Common myeloid progenitor, CD34-positive (primary cell): ENCODE measurements at regions of chr4 and their contacts with region 1.

Region 1: DNA sequence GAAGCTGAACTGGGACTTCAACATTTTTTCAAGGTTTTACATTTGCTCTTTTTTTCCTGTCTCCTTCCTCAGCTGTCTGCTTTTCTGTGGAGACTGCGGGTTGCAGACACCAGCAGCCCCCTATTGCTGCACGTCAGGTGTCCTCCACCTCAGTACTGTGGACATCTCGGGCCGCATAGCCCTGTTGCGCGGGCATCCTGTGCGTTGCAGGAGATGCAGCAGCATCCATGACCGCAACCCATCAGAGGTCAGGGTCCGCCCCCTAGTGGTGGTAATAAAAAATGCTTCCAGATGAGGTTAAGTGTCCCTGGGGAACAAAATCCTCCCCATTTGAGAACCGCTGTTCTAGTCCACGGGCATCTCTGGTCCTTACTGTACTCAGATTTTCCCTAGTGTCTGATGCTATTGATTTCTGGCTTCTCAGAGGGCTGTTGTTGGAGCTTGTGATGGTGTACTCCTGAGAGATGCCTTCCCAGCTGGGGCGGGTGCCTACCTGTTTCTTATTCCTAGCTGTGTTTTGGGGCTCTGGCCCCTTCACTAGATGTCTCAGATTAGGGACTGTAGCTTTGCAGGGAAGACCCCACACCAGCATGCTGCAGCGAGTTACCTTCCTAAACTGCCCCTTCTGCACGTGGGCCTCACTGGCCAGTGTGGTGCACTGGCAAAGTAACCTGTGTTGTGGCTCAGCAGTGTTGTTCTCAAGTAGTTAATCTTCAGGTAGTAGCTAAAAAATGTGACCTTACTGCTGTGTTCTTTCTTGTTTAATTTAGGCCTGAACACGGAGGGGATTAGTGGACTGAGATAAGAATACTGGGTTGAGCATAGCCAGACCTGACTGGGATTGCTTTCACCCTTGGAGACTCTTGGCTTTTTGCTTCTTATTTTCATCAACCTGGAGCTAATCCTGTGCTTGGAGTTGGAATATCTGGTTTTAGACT is 28.2 kb downstream of the NSD2 start:
- DNase-seq: peak; percentile 75 to 87 (median 86)
- H3K4me3 ChIP-seq: peak overlapping the region in 2 of 7 experiments; percentile 23 to 42
- H3K27ac ChIP-seq: no peak overlapping the region
- H3K4me1 ChIP-seq: peaks cover 0 to 3% (median 3%) of the 10 kb centered on the region in 4 experiments
- H3K27me3 ChIP-seq: no peaks in the 10 kb centered on the region

Region 2: DNA sequence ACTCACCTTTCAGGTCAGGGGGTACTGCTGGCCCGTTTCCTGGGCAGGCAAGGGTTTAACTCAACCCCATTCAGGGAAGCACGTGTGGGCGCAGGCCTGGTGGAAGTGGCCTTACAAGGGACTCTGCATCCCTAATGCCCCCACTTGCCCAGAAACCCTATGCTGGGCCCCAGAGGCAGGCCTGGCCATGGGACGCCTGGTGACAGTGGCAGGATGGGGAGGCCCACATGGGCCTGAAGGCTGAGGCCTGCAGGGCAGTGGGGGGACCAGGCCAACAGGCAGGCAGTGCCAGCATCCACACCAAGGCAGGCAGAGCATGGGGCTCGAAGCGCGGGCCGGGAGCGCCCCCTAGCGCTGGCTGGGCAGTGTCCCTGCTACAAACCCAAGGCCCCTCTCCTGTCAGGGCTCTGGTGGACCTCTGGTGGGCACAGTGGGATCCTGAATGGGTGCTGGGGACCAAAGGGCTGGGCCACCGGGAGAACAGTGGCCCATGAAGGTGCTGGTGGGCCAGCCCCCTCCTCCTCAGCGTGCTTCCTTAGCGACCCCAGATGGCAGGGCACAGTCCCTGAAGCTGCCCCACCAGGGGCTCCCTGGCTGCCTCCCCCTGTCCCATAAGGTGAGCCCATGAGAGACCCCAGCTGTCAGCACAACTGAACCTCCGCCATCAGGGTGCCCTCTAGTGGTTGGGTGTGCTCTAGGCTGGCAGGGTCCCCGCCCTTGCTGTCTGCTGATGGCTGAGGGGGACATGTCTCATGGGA is 89.5 kb before region 1 on chr4:
- CTCF ChIA-PET with region 1: interaction called, 22 read pairs
- POLR2A ChIA-PET with region 1: no interaction called
- DNase-seq: peak; percentile 76 to 88 (median 85)
- H3K4me3 ChIP-seq: no peak overlapping the region
- H3K27ac ChIP-seq: no peak overlapping the region
- H3K4me1 ChIP-seq: no peaks in the 10 kb centered on the region
- H3K27me3 ChIP-seq: no peaks in the 10 kb centered on the region

Region 3: DNA sequence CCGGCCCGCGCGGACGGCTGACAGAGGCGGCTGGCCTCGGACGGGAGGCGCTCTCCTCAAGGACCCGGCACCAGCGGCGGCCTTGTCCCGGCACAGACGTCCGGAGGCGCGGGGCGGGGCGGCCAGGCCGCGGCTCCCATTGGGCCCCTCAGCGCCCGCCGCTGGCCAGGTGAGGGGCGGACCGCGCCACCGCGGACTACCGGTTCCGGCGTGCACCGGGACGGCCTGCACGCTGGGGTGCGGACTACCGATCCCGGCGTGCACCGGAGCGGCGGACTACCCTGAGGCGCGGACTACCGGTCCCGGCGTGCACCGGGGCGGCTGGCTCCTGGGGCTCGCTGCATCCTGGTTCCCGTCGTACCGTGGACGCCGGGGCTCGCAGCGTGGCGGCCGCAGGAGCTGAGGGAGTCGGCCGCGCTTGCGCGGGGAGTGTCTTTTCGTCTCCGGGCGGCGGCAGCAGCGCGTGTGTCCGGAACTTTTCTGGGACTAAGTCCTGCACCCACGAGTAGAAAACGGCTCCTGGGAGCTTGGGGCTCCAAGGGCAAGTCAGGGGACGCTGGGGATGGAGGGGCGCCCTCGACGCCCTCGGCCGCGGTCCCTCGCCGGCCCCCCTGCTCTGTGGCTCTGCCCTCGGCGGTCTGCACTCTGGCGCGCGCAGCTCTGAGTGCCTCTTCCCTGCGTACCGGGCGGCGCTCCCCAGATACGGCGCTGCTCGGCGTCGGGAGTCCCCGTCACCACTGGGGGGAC is 43.2 kb before region 1 on chr4 and contains the start of gene LETM1:
- CTCF ChIA-PET with region 1: interaction called, 39 read pairs
- POLR2A ChIA-PET with region 1: no interaction called
- DNase-seq: peak; percentile 91 to 95 (median 93)
- H3K4me3 ChIP-seq: peak within 1 kb of the TSS; percentile 73 to 96 (median 83)
- H3K27ac ChIP-seq: peak within 1 kb of the TSS; percentile 15 to 79
- H3K4me1 ChIP-seq: peaks cover 0 to 25% (median 21%) of the 10 kb centered on the region in 4 experiments
- H3K27me3 ChIP-seq: no peaks in the 10 kb centered on the region

Region 4: DNA sequence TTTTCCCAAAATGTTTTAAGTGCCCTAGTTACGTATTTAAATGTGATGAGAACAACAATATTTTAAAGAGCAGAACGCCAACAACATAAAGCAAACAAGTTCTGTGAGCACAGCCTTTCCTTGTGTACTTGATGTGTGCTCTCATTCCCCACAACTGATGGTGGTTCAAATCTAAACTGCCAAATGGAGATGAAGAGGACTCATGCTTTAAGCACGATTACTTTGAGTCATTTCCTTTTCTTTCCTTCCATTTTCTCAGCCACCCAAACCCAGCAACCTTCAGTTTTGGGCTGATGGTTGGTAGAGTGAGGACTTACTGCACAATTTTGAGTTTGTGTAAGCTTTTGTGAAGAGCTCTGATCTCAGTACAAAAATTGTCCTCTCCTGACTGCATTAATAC is 26.5 kb before region 1 on chr4:
- CTCF ChIA-PET with region 1: interaction called, 44 read pairs
- POLR2A ChIA-PET with region 1: no interaction called
- DNase-seq: peak in 2 of 3 donors; percentile 49 to 61
- H3K4me3 ChIP-seq: peak overlapping the region in 5 of 7 experiments; percentile 6 to 93 (median 84)
- H3K27ac ChIP-seq: peak overlapping the region in 1 of 2 experiments; percentile 87
- H3K4me1 ChIP-seq: peaks cover 14 to 58% (median 39%) of the 10 kb centered on the region in 4 experiments
- H3K27me3 ChIP-seq: no peaks in the 10 kb centered on the region

Region 5: DNA sequence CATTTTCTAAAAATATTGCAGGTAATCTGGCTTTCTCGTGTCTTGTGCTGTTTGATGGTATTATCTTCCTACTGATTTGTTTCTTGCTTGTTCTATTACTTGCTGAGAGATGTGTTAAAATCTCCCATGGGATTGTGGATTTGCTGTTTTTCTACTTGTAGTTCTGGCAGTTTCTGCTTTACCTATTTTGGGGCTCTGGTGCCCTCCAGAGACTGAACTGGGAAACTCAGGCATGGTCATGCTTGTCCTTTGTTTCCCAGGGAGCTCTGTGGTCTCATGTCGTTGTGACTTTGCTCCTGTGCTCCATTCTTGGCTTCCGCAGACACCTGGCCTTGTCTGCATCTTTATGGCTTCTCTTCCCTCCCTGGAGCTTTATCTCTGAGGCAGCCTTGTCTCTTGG is 11.2 kb after region 1 on chr4:
- CTCF ChIA-PET with region 1: interaction called, 68 read pairs
- POLR2A ChIA-PET with region 1: no interaction called
- DNase-seq: peak; percentile 27 to 57 (median 52)
- H3K4me3 ChIP-seq: no peak overlapping the region
- H3K27ac ChIP-seq: no peak overlapping the region
- H3K4me1 ChIP-seq: peaks cover 0 to 3% (median 0%) of the 10 kb centered on the region in 4 experiments
- H3K27me3 ChIP-seq: no peaks in the 10 kb centered on the region